ENCODE measurements at regions of chr12 and their contacts with region 1.

Region 1: GRCh38 chr12:52156736-52157565 is 34.9 kb downstream of the KRT80 start:
- DNase-seq: peak; percentile 81 to 85
- H3K4me3 ChIP-seq: no peak overlapping the region
- H3K27ac ChIP-seq: peak overlapping the region in 2 of 3 donors; percentile 43 to 52
- H3K4me1 ChIP-seq: peaks cover 5 to 16% of the 10 kb centered on the region in 2 donors
- H3K27me3 ChIP-seq: no peaks in the 10 kb centered on the region
- CTCF ChIP-seq: peak; percentile 88 to 98 (median 95)
- POLR2A ChIP-seq: no peak

Region 2: DNA sequence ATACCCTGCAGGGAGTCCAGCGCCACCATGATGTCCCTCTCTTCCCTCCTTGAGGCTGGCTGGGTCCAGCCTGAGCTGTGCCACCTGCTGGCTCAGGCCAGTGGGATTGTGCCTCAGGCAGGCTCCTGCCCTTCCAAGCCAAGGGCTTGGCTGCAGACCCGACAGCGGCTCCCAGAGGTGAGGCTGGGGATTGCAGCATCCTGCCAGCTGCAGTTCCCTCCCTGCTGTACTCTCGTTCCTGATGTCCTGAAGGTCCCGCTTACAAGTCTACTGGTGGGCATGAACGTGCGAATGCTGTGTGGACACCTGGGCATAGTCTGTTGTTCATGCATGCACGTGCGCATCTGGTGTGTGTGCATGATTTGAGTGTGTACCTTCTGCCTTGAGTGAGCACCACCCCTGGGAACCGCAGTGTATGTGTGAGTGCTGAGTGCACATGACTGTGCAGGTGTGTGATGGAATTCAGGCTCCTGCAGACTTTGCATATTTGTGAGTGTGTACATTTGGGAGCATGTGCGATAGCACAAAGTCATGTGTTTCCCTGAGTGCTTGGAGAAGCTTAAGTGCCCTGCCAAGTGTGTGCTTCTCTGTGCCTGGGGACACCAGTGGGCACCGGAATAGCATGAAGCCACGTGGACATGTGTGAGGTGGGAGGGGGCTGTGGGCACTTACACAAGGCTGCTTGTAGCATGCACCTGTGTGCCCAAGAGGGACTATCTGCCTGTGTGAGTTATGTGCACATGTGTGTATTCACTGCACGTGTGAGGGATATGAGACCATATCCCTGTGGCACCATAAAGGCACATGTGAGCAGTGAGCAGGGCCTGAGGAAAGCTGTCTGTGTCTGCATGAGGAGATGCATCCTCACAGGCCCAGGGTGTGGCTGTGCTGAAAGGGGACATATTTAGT is 56.8 kb after region 1 on chr12:
- intact Hi-C with region 1: no loop called
- DNase-seq: peak; percentile 85 to 90
- H3K4me3 ChIP-seq: no peak overlapping the region
- H3K27ac ChIP-seq: peak overlapping the region; percentile 53 to 91 (median 91)
- H3K4me1 ChIP-seq: peaks cover 35 to 59% of the 10 kb centered on the region in 2 donors
- H3K27me3 ChIP-seq: no peaks in the 10 kb centered on the region
- CTCF ChIP-seq: peak; percentile 92 to 100 (median 99)
- POLR2A ChIP-seq: no peak

Region 3: DNA sequence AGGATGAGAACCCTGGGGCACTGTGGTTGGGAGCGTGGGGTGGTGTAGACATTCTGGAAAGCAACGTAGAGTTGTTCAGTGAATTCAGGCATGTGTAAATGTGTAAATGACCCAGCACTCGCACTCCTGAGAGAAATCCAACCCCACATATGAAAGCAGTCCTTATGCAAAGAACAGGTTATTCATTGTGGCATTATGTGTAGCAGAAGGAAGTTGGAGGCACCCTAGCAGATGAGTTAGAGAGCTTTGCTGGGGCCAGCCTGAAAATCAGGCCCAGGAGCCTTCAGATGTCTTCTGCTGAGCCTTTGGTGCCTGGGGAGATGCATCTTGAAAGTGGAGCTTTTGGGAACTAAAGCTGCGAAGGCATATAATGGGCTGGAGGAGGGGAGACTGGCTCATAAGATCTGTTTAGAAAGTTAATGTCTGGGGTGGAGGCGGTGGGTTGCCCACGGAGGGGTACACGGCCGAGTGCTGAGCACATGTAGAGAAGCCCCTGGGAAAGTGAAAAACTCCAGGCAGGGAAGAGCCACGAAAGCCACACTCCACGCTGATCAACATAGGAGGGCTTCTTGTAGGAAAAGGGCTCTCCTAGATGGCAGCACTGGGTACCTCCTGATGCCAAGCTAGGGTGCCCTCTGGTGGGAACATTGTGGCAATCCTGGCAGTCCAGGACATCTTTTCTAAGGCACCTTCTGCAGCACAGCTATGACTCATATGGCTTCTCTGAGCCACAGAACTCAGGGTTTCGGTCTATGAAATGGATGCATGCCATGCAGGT is 170.3 kb after region 1 on chr12:
- intact Hi-C with region 1: loop called (anchors 5 kb)
- DNase-seq: peak; percentile 85 to 86
- H3K4me3 ChIP-seq: no peak overlapping the region
- H3K27ac ChIP-seq: no peak overlapping the region
- H3K4me1 ChIP-seq: peaks cover 3 to 22% of the 10 kb centered on the region in 2 donors
- H3K27me3 ChIP-seq: no peaks in the 10 kb centered on the region
- CTCF ChIP-seq: peak; percentile 25 to 94 (median 86)
- POLR2A ChIP-seq: no peak

Region 4: GRCh38 chr12:52506858-52507715 is 350.1 kb after region 1 on chr12:
- intact Hi-C with region 1: loop called (anchors 10 kb)
- DNase-seq: no peak
- H3K4me3 ChIP-seq: no peak overlapping the region
- H3K27ac ChIP-seq: no peak overlapping the region
- H3K4me1 ChIP-seq: no peaks in the 10 kb centered on the region
- H3K27me3 ChIP-seq: no peaks in the 10 kb centered on the region
- CTCF ChIP-seq: peak in 5 of 6 experiments; percentile 16 to 64 (median 57)
- POLR2A ChIP-seq: no peak

Region 5: DNA sequence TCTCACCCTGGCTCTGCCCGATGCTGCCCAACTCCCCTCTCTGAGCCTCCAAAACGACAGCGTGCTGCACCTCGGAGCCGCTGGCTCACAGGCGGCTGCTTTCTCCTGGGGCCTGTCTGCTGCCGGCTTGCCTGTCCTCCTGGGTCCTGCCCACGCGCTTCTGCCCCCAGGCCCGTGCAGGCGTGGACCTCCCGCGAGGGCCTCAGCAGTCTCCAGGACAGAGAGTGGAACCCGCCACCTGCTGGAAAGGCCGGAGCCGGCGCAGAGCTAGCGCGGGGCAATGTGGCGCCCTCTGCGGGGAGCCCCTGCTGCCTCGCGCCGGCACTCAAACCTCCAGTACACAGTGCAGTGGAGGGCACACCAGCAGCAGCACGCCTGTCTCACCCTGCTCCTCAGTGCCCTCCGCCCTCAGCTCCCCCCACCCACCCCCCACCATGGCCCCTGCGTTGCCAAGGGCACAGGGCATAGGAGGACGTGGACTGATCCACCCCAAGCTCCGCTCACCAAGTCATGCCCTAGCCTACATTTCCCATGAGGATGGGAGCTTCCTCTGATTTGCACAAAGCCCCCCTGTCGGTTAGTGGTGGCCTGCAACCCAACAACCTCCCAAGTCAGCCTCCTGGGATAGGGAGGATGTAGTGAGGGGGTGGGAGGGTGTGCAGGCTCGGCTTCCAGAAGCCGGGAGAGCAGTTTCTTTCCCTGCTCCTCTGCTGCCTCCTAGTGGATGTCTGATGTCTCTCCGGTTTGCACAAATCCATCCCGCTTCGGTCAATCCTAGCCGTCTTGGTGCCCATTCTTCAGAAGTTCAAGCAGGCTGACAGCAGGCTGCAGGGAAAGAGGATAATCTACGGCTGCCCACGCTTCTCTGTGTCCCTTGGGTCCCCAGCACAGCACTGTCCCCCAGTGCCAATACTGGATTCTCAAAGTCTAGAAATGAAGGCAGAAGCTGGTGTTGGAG is 722.7 kb after region 1 on chr12:
- intact Hi-C with region 1: loop called (anchors 5 kb)
- DNase-seq: peak; percentile 79 to 81
- H3K4me3 ChIP-seq: no peak overlapping the region
- H3K27ac ChIP-seq: peak overlapping the region; percentile 32 to 50 (median 48)
- H3K4me1 ChIP-seq: peaks cover 22 to 43% of the 10 kb centered on the region in 2 donors
- H3K27me3 ChIP-seq: no peaks in the 10 kb centered on the region
- CTCF ChIP-seq: peak in 5 of 6 experiments; percentile 49 to 93 (median 84)
- POLR2A ChIP-seq: no peak

Measured in thyroid gland (tissue), 4 donors.